Naive thymus-derived CD8-positive, alpha-beta T cell (primary cell): ENCODE measurements at regions of chrX and their contacts with region 1.

Region 1: GRCh38 chrX:154013614-154014360 is 5.9 kb downstream of the IRAK1 start:
- DNase-seq: peak; percentile 31 to 73 (median 49)
- ATAC-seq: peak; percentile 77 to 84
- H3K4me3 Mint-ChIP-seq: peak overlapping the region in 1 of 10 donors; percentile 45
- H3K27ac Mint-ChIP-seq: peak overlapping the region in 8 of 10 donors; percentile 17 to 80 (median 64)
- H3K4me1 Mint-ChIP-seq: peaks cover 8 to 29% (median 23%) of the 10 kb centered on the region in 4 donors
- H3K27me3 Mint-ChIP-seq: no peaks in the 10 kb centered on the region

Region 2: GRCh38 chrX:154002215-154002719 is 11.5 kb before region 1 on chrX:
- POLR2A ChIA-PET with region 1: interaction called, 10 read pairs
- DNase-seq: no peak
- ATAC-seq: peak; percentile 77 to 91
- H3K4me3 Mint-ChIP-seq: peak overlapping the region; percentile 64 to 86 (median 78)
- H3K27ac Mint-ChIP-seq: peak overlapping the region in 9 of 10 donors; percentile 9 to 83 (median 61)
- H3K4me1 Mint-ChIP-seq: peaks cover 6 to 31% (median 19%) of the 10 kb centered on the region in 4 donors
- H3K27me3 Mint-ChIP-seq: no peaks in the 10 kb centered on the region